Stomach (tissue), 19 donors: ENCODE measurements at regions of chr6 and their contacts with region 1.

Region 1: GRCh38 chr6:111709615-111710398 is 104.1 kb upstream of the TRAF3IP2 start:
- DNase-seq: peak; percentile 69 to 91
- H3K4me3 ChIP-seq: no peak overlapping the region
- H3K27ac ChIP-seq: peak overlapping the region in 4 of 5 donors; percentile 29 to 74 (median 56)
- H3K4me1 ChIP-seq: peaks cover 24 to 53% (median 37%) of the 10 kb centered on the region in 4 donors
- H3K27me3 ChIP-seq: no peaks in the 10 kb centered on the region
- CTCF ChIP-seq: peak in 5 of 7 experiments; percentile 46 to 87 (median 76)
- EP300 ChIP-seq: no peak
- POLR2A ChIP-seq: no peak

Region 2: DNA sequence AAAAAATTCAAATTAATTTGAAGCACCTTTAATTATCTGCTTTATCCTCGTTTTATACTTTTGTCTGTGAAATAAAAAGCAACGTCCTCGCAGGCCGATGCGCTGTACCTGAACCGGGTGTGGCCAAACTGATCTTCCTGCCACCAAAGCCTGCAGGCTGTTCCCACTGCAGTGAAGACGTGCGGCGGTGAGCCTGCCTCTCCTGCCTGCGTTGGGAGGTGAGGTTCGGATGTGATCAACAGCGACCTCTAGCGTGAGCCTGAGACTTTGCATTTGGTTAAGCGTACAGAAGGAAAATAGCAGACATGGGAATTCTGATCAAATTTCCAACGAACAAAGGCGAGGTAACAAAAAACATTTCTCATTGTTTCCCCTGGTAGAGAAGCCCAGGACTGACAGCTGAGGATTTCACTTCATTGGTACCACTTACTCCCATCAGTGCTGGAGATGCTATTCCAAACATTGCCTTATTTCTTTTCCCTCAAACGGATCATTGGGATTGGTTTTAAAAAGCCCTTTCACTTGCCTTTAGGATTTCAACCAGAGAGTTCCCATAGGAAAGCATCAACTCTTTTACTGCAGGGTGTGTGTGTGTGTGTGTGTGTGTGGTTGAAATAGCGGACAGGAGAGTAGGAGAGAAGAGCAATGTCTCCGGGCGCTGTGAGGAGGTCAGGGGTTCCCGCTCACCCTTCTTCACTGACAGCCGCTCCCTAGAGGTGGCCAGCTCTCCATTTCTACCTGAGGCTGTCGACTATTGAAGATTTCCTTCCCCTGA is 287.5 kb after region 1 on chr6:
- intact Hi-C with region 1: loop called (anchors 5 kb)
- DNase-seq: peak; percentile 82 to 95
- H3K4me3 ChIP-seq: no peak overlapping the region
- H3K27ac ChIP-seq: peak overlapping the region in 2 of 5 donors; percentile 39 to 66
- H3K4me1 ChIP-seq: peaks cover 0 to 11% (median 8%) of the 10 kb centered on the region in 4 donors
- H3K27me3 ChIP-seq: no peaks in the 10 kb centered on the region
- CTCF ChIP-seq: peak in 5 of 7 experiments; percentile 79 to 96 (median 85)
- EP300 ChIP-seq: no peak
- POLR2A ChIP-seq: no peak

Region 3: DNA sequence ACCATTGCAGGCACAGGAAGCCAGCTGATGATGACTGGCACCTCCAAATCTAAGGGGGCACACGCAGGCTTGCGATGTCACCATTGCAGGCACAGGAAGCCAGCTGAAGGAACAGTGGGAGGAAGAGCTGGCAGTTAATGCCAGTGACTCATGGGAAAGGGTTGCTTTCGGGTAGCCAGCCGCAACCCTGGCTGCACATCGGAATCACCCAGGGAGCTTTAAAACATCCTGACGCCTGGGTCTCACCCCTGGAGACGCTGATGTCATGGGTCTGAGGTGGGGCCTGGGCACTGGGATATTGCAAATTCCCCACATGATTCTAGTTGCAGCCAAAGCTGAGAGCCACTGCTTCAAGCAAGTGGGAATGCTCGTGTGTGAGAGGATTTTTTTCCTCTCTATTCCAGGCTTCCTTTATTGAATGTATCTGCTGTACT is 328.0 kb after region 1 on chr6:
- intact Hi-C with region 1: loop called (anchors 10 kb)
- DNase-seq: peak in 1 of 2 donors; percentile 28
- H3K4me3 ChIP-seq: no peak overlapping the region
- H3K27ac ChIP-seq: peak overlapping the region in 4 of 5 donors; percentile 40 to 81 (median 54)
- H3K4me1 ChIP-seq: peaks cover 0 to 14% (median 7%) of the 10 kb centered on the region in 4 donors
- H3K27me3 ChIP-seq: no peaks in the 10 kb centered on the region
- CTCF ChIP-seq: no peak
- EP300 ChIP-seq: no peak
- POLR2A ChIP-seq: no peak